CD8-positive, alpha-beta T cell (primary cell): ENCODE measurements at regions of chr14 and their contacts with region 1.

Region 1: GRCh38 chr14:23068476-23069412 is 11.4 kb upstream of the CDH24 start:
- DNase-seq: peak; percentile 52 to 90 (median 73)
- ATAC-seq: peak; percentile 76
- H3K4me3 ChIP-seq: no peak overlapping the region
- H3K4me3 Mint-ChIP-seq: no peak overlapping the region
- H3K27ac ChIP-seq: no peak overlapping the region
- H3K27ac Mint-ChIP-seq: peak overlapping the region; percentile 39
- H3K4me1 ChIP-seq: peaks cover 28% of the 10 kb centered on the region
- H3K4me1 Mint-ChIP-seq: peaks cover 46% of the 10 kb centered on the region
- H3K27me3 ChIP-seq: no peaks in the 10 kb centered on the region
- H3K27me3 Mint-ChIP-seq: no peaks in the 10 kb centered on the region
- CTCF ChIP-seq: peak; percentile 99

Region 2: GRCh38 chr14:21807975-21808374 is 1260.8 kb before region 1 on chr14:
- CTCF ChIA-PET with region 1: no interaction called
- POLR2A ChIA-PET with region 1: no interaction called
- intact Hi-C with region 1: no loop called
- DNase-seq: no peak
- ATAC-seq: no peak
- H3K4me3 ChIP-seq: no peak overlapping the region
- H3K4me3 Mint-ChIP-seq: no peak overlapping the region
- H3K27ac ChIP-seq: no peak overlapping the region
- H3K27ac Mint-ChIP-seq: no peak overlapping the region
- H3K4me1 ChIP-seq: no peaks in the 10 kb centered on the region
- H3K4me1 Mint-ChIP-seq: no peaks in the 10 kb centered on the region
- H3K27me3 ChIP-seq: no peaks in the 10 kb centered on the region
- H3K27me3 Mint-ChIP-seq: peaks cover 32% of the 10 kb centered on the region
- CTCF ChIP-seq: no peak

Region 3: GRCh38 chr14:22994762-22995275 is 73.9 kb before region 1 on chr14:
- CTCF ChIA-PET with region 1: interaction called, 1,218 read pairs
- POLR2A ChIA-PET with region 1: no interaction called
- intact Hi-C with region 1: no loop called
- DNase-seq: peak in 7 of 9 experiments; percentile 13 to 63 (median 46)
- ATAC-seq: peak; percentile 85
- H3K4me3 ChIP-seq: no peak overlapping the region
- H3K4me3 Mint-ChIP-seq: no peak overlapping the region
- H3K27ac ChIP-seq: no peak overlapping the region
- H3K27ac Mint-ChIP-seq: no peak overlapping the region
- H3K4me1 ChIP-seq: peaks cover 3% of the 10 kb centered on the region
- H3K4me1 Mint-ChIP-seq: peaks cover 5% of the 10 kb centered on the region
- H3K27me3 ChIP-seq: no peaks in the 10 kb centered on the region
- H3K27me3 Mint-ChIP-seq: no peaks in the 10 kb centered on the region
- CTCF ChIP-seq: peak; percentile 46

Region 4: GRCh38 chr14:23085458-23085857 is 16.7 kb after region 1 on chr14:
- CTCF ChIA-PET with region 1: interaction called, 27 read pairs
- POLR2A ChIA-PET with region 1: interaction called, 3 read pairs
- intact Hi-C with region 1: no loop called
- DNase-seq: no peak
- ATAC-seq: no peak
- H3K4me3 ChIP-seq: no peak overlapping the region
- H3K4me3 Mint-ChIP-seq: no peak overlapping the region
- H3K27ac ChIP-seq: no peak overlapping the region
- H3K27ac Mint-ChIP-seq: peak overlapping the region; percentile 4
- H3K4me1 ChIP-seq: no peaks in the 10 kb centered on the region
- H3K4me1 Mint-ChIP-seq: peaks cover 38% of the 10 kb centered on the region
- H3K27me3 ChIP-seq: no peaks in the 10 kb centered on the region
- H3K27me3 Mint-ChIP-seq: no peaks in the 10 kb centered on the region
- CTCF ChIP-seq: no peak

Region 5: DNA sequence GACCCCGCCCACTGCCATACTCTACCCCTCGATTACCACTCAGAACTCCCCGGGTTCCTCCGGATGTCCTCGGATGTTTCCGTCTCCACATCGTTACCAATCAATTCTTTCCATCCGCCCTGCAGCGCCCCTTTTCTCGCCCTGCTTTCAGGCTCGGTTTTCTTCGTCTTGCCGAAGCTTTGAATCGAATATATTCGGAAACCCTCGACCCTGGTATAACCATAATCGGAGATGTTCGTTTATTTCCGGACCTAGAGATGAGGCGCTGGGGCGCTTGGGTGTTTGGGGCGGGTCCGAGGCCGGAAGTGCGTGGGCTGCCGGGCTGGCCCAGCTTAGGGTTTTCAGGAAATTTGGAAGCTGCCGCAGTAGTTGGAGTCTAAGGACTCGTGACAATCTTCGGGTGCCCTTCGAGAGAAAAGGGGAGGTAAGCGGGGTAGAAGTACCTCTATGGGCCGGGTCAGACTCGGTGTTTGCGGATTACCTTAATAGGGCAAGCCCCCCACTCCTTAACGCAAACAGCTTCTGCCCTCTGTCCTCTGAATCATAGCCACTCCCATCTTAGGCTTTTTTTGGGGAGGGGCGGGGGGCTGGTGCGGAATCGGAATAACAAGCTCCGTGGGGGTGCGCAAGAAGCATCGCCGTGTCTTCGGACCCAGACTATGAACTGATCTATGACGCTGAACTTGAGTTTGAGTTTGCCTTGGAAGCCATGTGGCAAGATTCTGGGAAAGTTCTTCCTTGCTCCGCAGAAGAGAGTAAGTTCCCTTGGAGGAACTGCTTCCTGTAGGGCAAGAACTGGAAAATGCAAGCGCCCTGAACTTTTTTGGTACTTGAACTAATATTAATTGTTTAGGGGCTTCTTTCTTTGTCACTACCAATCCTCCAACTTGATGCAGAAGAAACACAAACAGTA is 26.7 kb after region 1 on chr14 and contains the start of gene C14orf119:
- CTCF ChIA-PET with region 1: interaction called, 27 read pairs
- POLR2A ChIA-PET with region 1: interaction called, 16 read pairs
- intact Hi-C with region 1: loop called (anchors 1 kb)
- DNase-seq: peak in 8 of 9 experiments; percentile 98 to 100 (median 100)
- ATAC-seq: peak; percentile 86
- H3K4me3 ChIP-seq: peak within 1 kb of the TSS; percentile 81 to 93
- H3K4me3 Mint-ChIP-seq: no peak within 1 kb of the TSS
- H3K27ac ChIP-seq: peak within 1 kb of the TSS; percentile 93 to 98
- H3K27ac Mint-ChIP-seq: no peak within 1 kb of the TSS
- H3K4me1 ChIP-seq: peaks cover 39% of the 10 kb centered on the region
- H3K4me1 Mint-ChIP-seq: peaks cover 51% of the 10 kb centered on the region
- H3K27me3 ChIP-seq: no peaks in the 10 kb centered on the region
- H3K27me3 Mint-ChIP-seq: no peaks in the 10 kb centered on the region
- CTCF ChIP-seq: no peak
- total RNA-seq, gene C14orf119: 3.5 to 3.8 TPM

Region 6: GRCh38 chr14:23113431-23114119 is 44.8 kb after region 1 on chr14:
- CTCF ChIA-PET with region 1: interaction called, 11 read pairs
- POLR2A ChIA-PET with region 1: no interaction called
- intact Hi-C with region 1: loop called in 1 of 2 experiments (anchors 1 kb)
- DNase-seq: no peak
- ATAC-seq: no peak
- H3K4me3 ChIP-seq: no peak overlapping the region
- H3K4me3 Mint-ChIP-seq: no peak overlapping the region
- H3K27ac ChIP-seq: no peak overlapping the region
- H3K27ac Mint-ChIP-seq: no peak overlapping the region
- H3K4me1 ChIP-seq: peaks cover 25% of the 10 kb centered on the region
- H3K4me1 Mint-ChIP-seq: peaks cover 32% of the 10 kb centered on the region
- H3K27me3 ChIP-seq: peaks cover 0 to 7% of the 10 kb centered on the region in 2 experiments
- H3K27me3 Mint-ChIP-seq: peaks cover 2% of the 10 kb centered on the region
- CTCF ChIP-seq: no peak

Region 7: GRCh38 chr14:23186913-23187654 is 118.3 kb after region 1 on chr14:
- CTCF ChIA-PET with region 1: interaction called, 18 read pairs
- POLR2A ChIA-PET with region 1: no interaction called
- intact Hi-C with region 1: loop called (anchors 1 to 2 kb)
- DNase-seq: peak in 3 of 9 experiments; percentile 14 to 66 (median 54)
- ATAC-seq: peak; percentile 54
- H3K4me3 ChIP-seq: no peak overlapping the region
- H3K4me3 Mint-ChIP-seq: no peak overlapping the region
- H3K27ac ChIP-seq: no peak overlapping the region
- H3K27ac Mint-ChIP-seq: no peak overlapping the region
- H3K4me1 ChIP-seq: peaks cover 8% of the 10 kb centered on the region
- H3K4me1 Mint-ChIP-seq: peaks cover 4% of the 10 kb centered on the region
- H3K27me3 ChIP-seq: no peaks in the 10 kb centered on the region
- H3K27me3 Mint-ChIP-seq: no peaks in the 10 kb centered on the region
- CTCF ChIP-seq: peak; percentile 57

Region 8: GRCh38 chr14:23379366-23380196 is 310.8 kb after region 1 on chr14:
- CTCF ChIA-PET with region 1: interaction called, 7 read pairs
- POLR2A ChIA-PET with region 1: no interaction called
- intact Hi-C with region 1: loop called in 1 of 2 experiments (anchors 1 kb)
- DNase-seq: peak; percentile 41 to 81 (median 69)
- ATAC-seq: peak; percentile 88
- H3K4me3 ChIP-seq: no peak overlapping the region
- H3K4me3 Mint-ChIP-seq: no peak overlapping the region
- H3K27ac ChIP-seq: no peak overlapping the region
- H3K27ac Mint-ChIP-seq: no peak overlapping the region
- H3K4me1 ChIP-seq: no peaks in the 10 kb centered on the region
- H3K4me1 Mint-ChIP-seq: no peaks in the 10 kb centered on the region
- H3K27me3 ChIP-seq: no peaks in the 10 kb centered on the region
- H3K27me3 Mint-ChIP-seq: peaks cover 14% of the 10 kb centered on the region
- CTCF ChIP-seq: peak; percentile 76